ENCODE measurements at regions of chr19 and their contacts with region 1.

Region 1: GRCh38 chr19:7340959-7341837 is 7.5 kb upstream of the ARHGEF18 start:
- DNase-seq: peak; percentile 83
- ATAC-seq: no peak
- H3K4me3 Mint-ChIP-seq: peak overlapping the region; percentile 52
- H3K27ac Mint-ChIP-seq: peak overlapping the region; percentile 82
- H3K4me1 Mint-ChIP-seq: peaks cover 91% of the 10 kb centered on the region
- H3K27me3 Mint-ChIP-seq: no peaks in the 10 kb centered on the region
- CTCF ChIP-seq: peak; percentile 64

Region 2: GRCh38 chr19:7197760-7198696 is 143.2 kb before region 1 on chr19:
- CTCF ChIA-PET with region 1: no interaction called
- POLR2A ChIA-PET with region 1: interaction called, 3 read pairs
- intact Hi-C with region 1: loop called (anchors 2 kb)
- DNase-seq: peak; percentile 90
- ATAC-seq: peak; percentile 83
- H3K4me3 Mint-ChIP-seq: peak overlapping the region; percentile 89
- H3K27ac Mint-ChIP-seq: peak overlapping the region; percentile 96
- H3K4me1 Mint-ChIP-seq: peaks cover 23% of the 10 kb centered on the region
- H3K27me3 Mint-ChIP-seq: peaks cover 2% of the 10 kb centered on the region
- CTCF ChIP-seq: no peak

Region 3: DNA sequence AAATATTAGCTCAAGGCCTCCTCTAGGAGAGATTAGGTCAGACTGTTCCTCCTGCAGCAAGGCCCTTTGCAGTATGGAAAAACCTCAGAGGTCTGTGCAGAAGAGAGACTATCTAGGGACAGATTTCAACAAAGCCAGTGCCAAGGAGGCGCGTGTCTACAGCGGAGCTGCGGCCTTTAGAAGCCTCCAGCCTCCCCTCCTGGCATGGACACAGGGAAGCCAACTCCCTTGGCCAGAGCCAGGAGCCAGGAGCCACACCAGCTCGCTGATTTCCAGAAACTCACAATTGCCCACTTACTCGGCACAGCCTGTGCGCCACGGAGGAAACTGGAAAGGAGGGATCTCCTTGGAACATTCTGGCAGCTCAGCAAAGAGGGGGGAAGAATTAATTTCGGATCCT is 110.4 kb before region 1 on chr19:
- CTCF ChIA-PET with region 1: no interaction called
- POLR2A ChIA-PET with region 1: no interaction called
- intact Hi-C with region 1: no loop called
- DNase-seq: no peak
- ATAC-seq: no peak
- H3K4me3 Mint-ChIP-seq: no peak overlapping the region
- H3K27ac Mint-ChIP-seq: no peak overlapping the region
- H3K4me1 Mint-ChIP-seq: no peaks in the 10 kb centered on the region
- H3K27me3 Mint-ChIP-seq: no peaks in the 10 kb centered on the region
- CTCF ChIP-seq: no peak

Region 4: DNA sequence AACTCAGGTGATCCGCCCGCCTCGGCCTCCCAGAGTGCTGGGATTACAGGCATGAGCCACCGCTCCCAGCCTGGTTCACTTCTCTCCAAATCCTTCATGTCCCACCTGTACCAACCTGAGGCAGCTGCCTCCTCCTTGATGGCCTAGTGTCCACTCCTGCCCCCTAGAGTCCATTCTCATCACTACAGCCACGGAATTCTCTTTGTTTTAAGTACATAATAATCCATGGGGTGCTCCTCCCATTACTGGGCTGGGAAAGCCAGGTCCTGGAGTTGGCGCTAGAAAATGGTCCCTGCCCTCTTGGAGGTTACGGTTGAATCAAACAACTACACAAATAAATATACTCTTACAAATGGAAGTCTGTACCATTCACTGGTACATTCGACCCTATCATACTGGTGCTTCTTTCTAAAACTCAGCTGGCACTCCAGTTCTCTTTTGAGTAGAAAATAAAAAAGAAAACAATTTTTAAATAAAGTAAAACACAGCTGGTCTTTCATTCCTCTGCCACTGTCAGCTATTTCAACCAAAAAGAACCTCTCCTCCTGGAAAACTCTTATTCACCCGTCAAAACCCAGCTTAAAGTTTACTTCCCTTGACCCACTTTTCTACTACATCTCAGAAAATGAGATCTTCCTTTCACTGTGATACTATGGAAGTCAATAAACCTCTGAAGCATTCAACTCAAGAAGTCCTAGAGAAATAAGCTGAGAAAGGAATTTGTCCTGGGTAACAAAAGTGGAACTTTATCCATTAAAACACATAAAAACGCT is 14.9 kb before region 1 on chr19:
- CTCF ChIA-PET with region 1: interaction called, 84 read pairs
- POLR2A ChIA-PET with region 1: interaction called, 8 read pairs
- intact Hi-C with region 1: loop called (anchors 1 kb)
- DNase-seq: no peak
- ATAC-seq: no peak
- H3K4me3 Mint-ChIP-seq: no peak overlapping the region
- H3K27ac Mint-ChIP-seq: peak overlapping the region; percentile 25
- H3K4me1 Mint-ChIP-seq: peaks cover 7% of the 10 kb centered on the region
- H3K27me3 Mint-ChIP-seq: no peaks in the 10 kb centered on the region
- CTCF ChIP-seq: no peak

Region 5: GRCh38 chr19:7376151-7376852 is 35.1 kb after region 1 on chr19:
- CTCF ChIA-PET with region 1: interaction called, 4 read pairs
- POLR2A ChIA-PET with region 1: no interaction called
- intact Hi-C with region 1: loop called (anchors 1 kb)
- DNase-seq: no peak
- ATAC-seq: no peak
- H3K4me3 Mint-ChIP-seq: no peak overlapping the region
- H3K27ac Mint-ChIP-seq: peak overlapping the region; percentile 41
- H3K4me1 Mint-ChIP-seq: peaks cover 8% of the 10 kb centered on the region
- H3K27me3 Mint-ChIP-seq: no peaks in the 10 kb centered on the region
- CTCF ChIP-seq: no peak